ENCODE measurements at regions of chr2 and their contacts with region 1.

Region 1: DNA sequence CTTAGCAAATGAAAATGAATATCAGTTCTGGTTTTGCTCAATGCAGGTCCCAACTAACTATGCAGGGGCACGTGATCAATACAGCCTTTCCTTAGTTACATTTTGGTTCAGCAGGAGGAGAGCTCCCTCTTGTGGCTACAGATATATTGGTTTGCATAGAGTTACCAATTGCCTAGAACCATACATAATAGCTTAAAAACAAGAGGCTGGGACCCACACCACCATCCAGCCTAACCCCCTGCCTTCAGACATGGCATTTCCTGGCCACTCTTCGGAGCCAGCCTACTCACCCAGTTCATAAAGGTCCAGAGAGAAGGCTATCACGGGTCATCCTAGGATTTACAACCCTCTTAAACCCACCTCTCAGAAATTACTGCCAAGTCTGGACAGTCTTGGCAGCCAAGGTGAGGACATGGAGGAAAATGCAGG is 10.5 kb downstream of the CCDC93 start:
- DNase-seq: peak; percentile 10 to 16
- ATAC-seq: peak; percentile 90 to 97
- H3K4me3 ChIP-seq: no peak overlapping the region
- H3K27ac ChIP-seq: no peak overlapping the region
- H3K4me1 ChIP-seq: peaks cover 0 to 5% of the 10 kb centered on the region in 2 donors
- H3K27me3 ChIP-seq: no peaks in the 10 kb centered on the region
- CTCF ChIP-seq: peak; percentile 62 to 83 (median 71)
- POLR2A ChIP-seq: no peak

Region 2: GRCh38 chr2:117820444-117820843 is 183.0 kb before region 1 on chr2:
- in situ Hi-C with region 1: loop called in 3 of 4 experiments (anchors 5 to 10 kb)
- intact Hi-C with region 1: no loop called
- DNase-seq: no peak
- ATAC-seq: no peak
- H3K4me3 ChIP-seq: no peak overlapping the region
- H3K27ac ChIP-seq: no peak overlapping the region
- H3K4me1 ChIP-seq: peaks cover 10 to 20% of the 10 kb centered on the region in 2 donors
- H3K27me3 ChIP-seq: no peaks in the 10 kb centered on the region
- CTCF ChIP-seq: no peak
- POLR2A ChIP-seq: no peak

Region 3: GRCh38 chr2:117835990-117836760 is 167.2 kb before region 1 on chr2:
- in situ Hi-C with region 1: loop called in 1 of 4 experiments (anchors 5 kb)
- intact Hi-C with region 1: loop called (anchors 1 kb)
- DNase-seq: peak; percentile 50 to 68
- ATAC-seq: peak; percentile 88 to 89
- H3K4me3 ChIP-seq: peak overlapping the region; percentile 47 to 65 (median 50)
- H3K27ac ChIP-seq: peak overlapping the region in 1 of 4 donors; percentile 22
- H3K4me1 ChIP-seq: no peaks in the 10 kb centered on the region
- H3K27me3 ChIP-seq: no peaks in the 10 kb centered on the region
- CTCF ChIP-seq: peak; percentile 55 to 85 (median 62)
- POLR2A ChIP-seq: no peak

Region 4: GRCh38 chr2:117968722-117969121 is 34.7 kb before region 1 on chr2:
- in situ Hi-C with region 1: no loop called
- intact Hi-C with region 1: loop called (anchors 2 kb)
- DNase-seq: no peak
- ATAC-seq: no peak
- H3K4me3 ChIP-seq: no peak overlapping the region
- H3K27ac ChIP-seq: no peak overlapping the region
- H3K4me1 ChIP-seq: peaks cover 8 to 20% of the 10 kb centered on the region in 2 donors
- H3K27me3 ChIP-seq: no peaks in the 10 kb centered on the region
- CTCF ChIP-seq: no peak
- POLR2A ChIP-seq: no peak

Region 5: DNA sequence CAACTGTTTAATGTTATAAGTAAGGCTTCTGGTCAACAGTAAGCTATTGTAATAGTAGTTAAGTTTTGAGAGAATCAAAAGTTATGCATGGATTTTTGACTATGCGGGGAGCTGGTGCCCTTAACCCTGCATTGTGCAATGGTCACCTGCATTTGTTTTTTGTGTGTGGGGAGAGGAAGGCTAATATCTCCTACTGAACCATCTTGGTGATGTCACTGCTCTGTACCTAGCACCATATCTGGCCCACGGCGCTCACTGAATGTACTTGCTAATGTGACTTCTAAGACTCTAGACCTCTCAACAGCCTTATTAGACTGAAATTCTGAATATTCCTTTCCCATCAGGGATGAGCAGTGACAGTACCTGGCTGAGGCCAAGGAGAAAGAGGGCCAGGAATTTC is 69.9 kb after region 1 on chr2:
- in situ Hi-C with region 1: no loop called
- intact Hi-C with region 1: no loop called
- DNase-seq: no peak
- ATAC-seq: no peak
- H3K4me3 ChIP-seq: no peak overlapping the region
- H3K27ac ChIP-seq: no peak overlapping the region
- H3K4me1 ChIP-seq: no peaks in the 10 kb centered on the region
- H3K27me3 ChIP-seq: no peaks in the 10 kb centered on the region
- CTCF ChIP-seq: no peak
- POLR2A ChIP-seq: no peak